Head of caudate nucleus (tissue), 42 donors: ENCODE measurements at regions of chr12 and their contacts with region 1.

Region 1: GRCh38 chr12:107607464-107608392 is 77.9 kb upstream of the PWP1 start:
- DNase-seq: peak; percentile 62 to 92 (median 86)

Region 2: GRCh38 chr12:107131832-107132616 is 475.7 kb before region 1 on chr12:
- intact Hi-C with region 1: loop called (anchors 5 kb)
- DNase-seq: peak in 23 of 42 donors; percentile 1 to 70 (median 27)